Lower leg skin (tissue), 4 donors: ENCODE measurements at regions of chr1 and their contacts with region 1.

Region 1: DNA sequence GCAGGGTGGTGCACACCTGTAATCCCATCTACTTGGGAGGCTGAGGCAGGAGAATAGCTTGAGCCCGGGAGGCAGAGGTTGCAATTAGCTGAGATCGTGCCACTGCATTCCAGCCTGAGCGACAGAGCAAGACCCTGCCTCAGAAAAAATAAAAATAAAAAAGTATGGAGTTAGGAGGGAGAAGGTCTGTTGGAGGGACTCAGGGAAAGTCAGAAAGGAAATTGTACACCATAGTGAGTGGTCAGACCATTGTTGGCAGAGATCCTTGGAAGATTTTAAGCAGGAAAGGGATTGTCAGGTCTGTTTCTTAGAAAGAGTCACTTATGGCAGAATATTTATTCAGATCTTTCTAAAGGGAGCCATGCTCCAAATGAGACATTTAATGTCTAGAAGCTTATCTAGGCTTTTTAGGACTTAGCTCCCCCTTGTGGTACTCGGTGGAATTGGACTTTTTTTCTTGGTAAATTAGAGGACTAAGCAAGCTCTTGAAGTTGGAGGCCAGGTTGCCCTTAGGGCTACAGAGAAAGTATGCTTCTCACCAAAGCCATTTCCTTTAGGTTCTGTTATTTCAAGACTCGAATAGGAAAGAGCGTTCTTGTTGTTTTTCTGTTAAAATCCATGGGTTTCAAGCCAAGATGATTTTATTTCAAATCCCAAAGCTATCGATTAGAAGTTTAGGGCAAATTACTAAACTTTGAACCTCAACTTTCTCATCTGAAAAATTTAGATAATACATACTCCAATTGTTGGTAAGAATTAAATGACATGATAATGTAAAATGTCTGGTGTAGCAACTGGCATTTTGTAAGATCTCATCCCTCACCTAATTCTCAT is 16.5 kb downstream of the MIA3 start:
- DNase-seq: peak in 1 of 2 donors; percentile 89
- H3K4me3 ChIP-seq: no peak overlapping the region
- CTCF ChIP-seq: peak in 1 of 3 donors; percentile 11
- POLR2A ChIP-seq: no peak

Region 2: GRCh38 chr1:222465211-222466041 is 169.0 kb before region 1 on chr1:
- intact Hi-C with region 1: loop called (anchors 10 kb)
- DNase-seq: peak; percentile 84 to 97
- H3K4me3 ChIP-seq: peak overlapping the region; percentile 11
- CTCF ChIP-seq: peak in 2 of 3 donors; percentile 85 to 99
- POLR2A ChIP-seq: no peak